ENCODE measurements at regions of chr3 and their contacts with region 1.

Region 1: GRCh38 chr3:39724233-39724846 is 85.1 kb upstream of the MYRIP start:
- DNase-seq: no peak
- ATAC-seq: peak in 1 of 4 donors; percentile 62
- H3K4me3 ChIP-seq: no peak overlapping the region
- H3K27ac ChIP-seq: no peak overlapping the region
- H3K4me1 ChIP-seq: no peaks in the 10 kb centered on the region
- H3K27me3 ChIP-seq: no peaks in the 10 kb centered on the region
- CTCF ChIP-seq: peak; percentile 45

Region 2: DNA sequence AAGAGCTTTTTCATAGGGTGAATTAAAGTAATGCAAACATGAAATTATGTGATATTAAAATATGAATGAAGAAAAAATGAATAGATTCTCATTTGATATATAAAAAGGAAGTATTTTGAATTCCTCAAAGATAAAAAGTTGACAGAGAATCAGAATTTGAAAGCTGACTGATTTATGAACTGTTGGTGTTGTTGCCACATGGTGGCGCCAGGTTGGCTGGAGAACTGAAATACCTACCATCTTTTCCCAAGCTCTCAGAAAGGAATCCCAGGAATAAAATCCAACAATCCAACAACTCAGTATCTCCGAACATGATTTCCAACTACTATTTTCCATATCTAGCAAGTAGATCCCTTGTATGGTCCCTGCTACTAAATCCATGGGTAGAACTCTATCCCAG is 88.2 kb after region 1 on chr3:
- intact Hi-C with region 1: loop called in 1 of 2 experiments (anchors 5 kb)
- DNase-seq: no peak
- ATAC-seq: no peak
- H3K4me3 ChIP-seq: no peak overlapping the region
- H3K27ac ChIP-seq: no peak overlapping the region
- H3K4me1 ChIP-seq: peaks cover 15% of the 10 kb centered on the region
- H3K27me3 ChIP-seq: peaks cover 4 to 51% (median 5%) of the 10 kb centered on the region in 3 donors
- CTCF ChIP-seq: peak; percentile 8

Region 3: DNA sequence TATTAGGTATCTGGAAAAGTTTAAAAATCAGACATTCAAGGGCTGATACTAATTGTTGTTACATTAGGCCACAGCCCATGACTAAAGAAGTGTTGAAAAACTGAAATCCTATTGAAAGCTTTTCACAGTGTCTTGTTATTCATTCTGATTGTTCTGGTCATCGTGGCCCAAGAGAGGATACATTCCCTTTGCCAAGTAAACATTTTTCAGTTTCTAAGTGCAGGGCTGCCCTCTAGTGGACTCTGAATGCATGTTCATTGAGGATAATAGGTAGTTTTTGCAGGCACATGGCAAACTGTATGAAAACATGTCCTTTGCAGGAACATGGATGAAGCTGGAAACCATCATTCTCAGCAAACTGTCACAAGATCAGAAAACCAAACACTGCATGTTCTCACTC is 266.2 kb after region 1 on chr3:
- intact Hi-C with region 1: loop called in 1 of 2 experiments (anchors 10 kb)
- DNase-seq: no peak
- ATAC-seq: no peak
- H3K4me3 ChIP-seq: no peak overlapping the region
- H3K27ac ChIP-seq: no peak overlapping the region
- H3K4me1 ChIP-seq: no peaks in the 10 kb centered on the region
- H3K27me3 ChIP-seq: no peaks in the 10 kb centered on the region
- CTCF ChIP-seq: peak; percentile 46

Region 4: DNA sequence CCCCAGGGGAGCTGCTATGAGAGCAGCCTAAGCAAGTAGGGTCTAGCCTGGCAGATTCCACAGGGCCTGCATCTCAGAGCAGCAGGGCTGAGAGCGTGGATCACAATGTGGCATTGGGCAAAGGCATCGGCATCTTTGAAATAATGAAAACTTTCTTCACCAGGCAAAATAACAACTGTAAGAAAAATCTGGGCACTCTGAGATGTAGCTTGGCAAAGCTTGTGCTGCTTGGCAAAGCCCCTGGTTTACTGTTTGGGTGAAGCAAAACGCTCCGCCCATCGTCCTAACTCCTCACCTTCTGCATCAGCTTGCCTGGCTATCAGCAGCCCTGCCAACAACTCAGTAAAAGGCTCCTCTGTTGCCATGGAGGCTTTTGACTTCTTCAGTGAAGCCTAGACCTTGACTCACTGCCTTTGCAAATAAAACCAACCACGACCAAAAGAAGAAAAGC is 372.3 kb after region 1 on chr3:
- intact Hi-C with region 1: no loop called
- DNase-seq: no peak
- ATAC-seq: no peak
- H3K4me3 ChIP-seq: no peak overlapping the region
- H3K27ac ChIP-seq: no peak overlapping the region
- H3K4me1 ChIP-seq: no peaks in the 10 kb centered on the region
- H3K27me3 ChIP-seq: no peaks in the 10 kb centered on the region
- CTCF ChIP-seq: no peak

Region 5: GRCh38 chr3:40152482-40153133 is 428.3 kb after region 1 on chr3:
- intact Hi-C with region 1: no loop called
- DNase-seq: no peak
- ATAC-seq: peak; percentile 78 to 99 (median 94)
- H3K4me3 ChIP-seq: peak overlapping the region; percentile 0
- H3K27ac ChIP-seq: peak overlapping the region; percentile 75
- H3K4me1 ChIP-seq: peaks cover 3% of the 10 kb centered on the region
- H3K27me3 ChIP-seq: no peaks in the 10 kb centered on the region
- CTCF ChIP-seq: no peak

Measured in psoas muscle (tissue), 8 donors.